ENCODE measurements at regions of chrX and their contacts with region 1.

Region 1: DNA sequence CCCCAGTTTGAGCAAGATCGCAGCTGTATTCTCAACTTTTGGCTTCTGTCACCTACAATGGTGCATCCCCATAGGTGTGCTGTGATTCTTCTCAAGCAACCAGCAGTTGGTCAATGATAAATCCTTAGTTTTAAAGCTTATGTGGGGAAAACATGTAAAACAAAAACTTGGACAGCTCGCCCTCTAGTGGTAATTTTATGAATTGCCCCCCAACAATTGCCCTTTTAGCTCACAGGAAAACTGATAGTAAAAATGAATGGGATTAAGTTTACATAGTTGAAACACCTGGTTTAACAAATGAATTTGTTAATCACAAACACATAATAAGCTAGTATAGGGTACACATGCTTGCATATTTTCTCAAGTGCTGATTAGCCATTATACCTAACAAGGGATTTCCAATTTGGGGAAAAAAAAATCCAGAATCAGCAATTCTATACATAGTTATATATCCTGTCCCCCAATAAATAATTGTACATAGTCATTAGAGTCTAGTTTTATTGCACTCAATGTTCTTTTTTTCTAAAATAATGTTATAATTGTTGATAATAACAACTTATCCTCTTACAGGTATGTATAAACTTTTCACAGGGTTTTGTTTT is 30.1 kb downstream of the TEX13A start:
- DNase-seq: peak; percentile 16
- CTCF ChIP-seq: peak; percentile 47

Region 2: GRCh38 chrX:105210258-105210657 is 19.9 kb after region 1 on chrX:
- CTCF ChIA-PET with region 1: interaction called, 11 read pairs
- POLR2A ChIA-PET with region 1: no interaction called
- DNase-seq: no peak
- CTCF ChIP-seq: no peak

Region 3: DNA sequence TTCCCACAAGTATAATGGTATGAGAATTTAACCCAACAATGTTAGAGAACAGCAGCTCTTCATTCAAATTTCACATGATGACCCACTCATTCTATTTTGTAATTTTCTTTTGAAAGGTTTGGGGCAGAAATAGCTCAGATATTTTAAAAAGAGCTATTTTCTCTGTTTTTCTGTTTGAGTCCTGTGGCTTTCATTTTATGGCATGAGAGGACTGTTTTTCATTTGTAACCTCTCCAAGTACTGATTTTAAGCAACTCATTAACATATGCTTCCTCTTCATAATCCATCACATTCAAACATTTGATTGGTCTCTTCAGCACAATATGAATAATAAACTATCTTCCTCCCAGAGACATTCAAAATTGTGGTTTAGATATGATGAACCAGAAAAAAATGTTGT is 159.1 kb after region 1 on chrX:
- CTCF ChIA-PET with region 1: no interaction called
- POLR2A ChIA-PET with region 1: no interaction called
- DNase-seq: no peak
- CTCF ChIP-seq: no peak

Measured in GM10248 (cell line).